ENCODE measurements at regions of chr1 and their contacts with region 1.

Region 1: DNA sequence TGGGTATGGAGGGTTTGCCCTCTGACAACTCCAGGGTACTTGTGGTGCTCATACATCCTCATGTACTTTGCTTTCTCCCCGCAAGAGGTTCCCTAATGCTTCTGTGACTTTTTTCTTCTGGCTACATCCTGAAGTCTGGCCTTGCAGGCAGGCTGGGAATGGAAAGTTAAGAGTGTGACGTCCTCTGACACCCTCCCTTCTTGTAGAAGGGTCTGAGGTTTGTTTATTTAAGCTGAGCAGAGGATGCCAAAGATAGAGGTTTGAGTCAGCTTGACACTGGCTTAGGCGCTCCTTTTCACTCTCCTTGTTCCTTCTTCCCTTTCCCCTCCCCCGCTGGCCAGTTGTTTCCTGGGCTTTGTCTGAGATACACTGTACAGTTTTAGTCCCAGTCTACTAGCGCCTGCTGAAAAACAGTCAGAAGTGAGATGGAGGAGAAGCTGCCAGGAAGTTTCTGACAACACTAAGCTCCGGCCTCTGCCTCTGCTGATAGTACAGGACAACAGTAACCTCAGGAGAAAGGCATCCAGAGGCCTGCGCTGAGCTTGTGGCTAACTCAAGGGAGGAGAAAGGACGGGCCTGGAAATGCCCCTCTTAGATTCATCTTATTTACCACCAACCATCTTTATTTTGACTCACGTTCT is at the start of gene MACF1:
- DNase-seq: peak; percentile 46
- H3K4me3 Mint-ChIP-seq: peak within 1 kb of the TSS; percentile 87
- H3K27ac Mint-ChIP-seq: peak within 1 kb of the TSS; percentile 93
- H3K4me1 Mint-ChIP-seq: peaks cover 59% of the 10 kb centered on the region
- H3K27me3 Mint-ChIP-seq: no peaks in the 10 kb centered on the region
- total RNA-seq, gene MACF1: 375 to 395 TPM

Region 2: DNA sequence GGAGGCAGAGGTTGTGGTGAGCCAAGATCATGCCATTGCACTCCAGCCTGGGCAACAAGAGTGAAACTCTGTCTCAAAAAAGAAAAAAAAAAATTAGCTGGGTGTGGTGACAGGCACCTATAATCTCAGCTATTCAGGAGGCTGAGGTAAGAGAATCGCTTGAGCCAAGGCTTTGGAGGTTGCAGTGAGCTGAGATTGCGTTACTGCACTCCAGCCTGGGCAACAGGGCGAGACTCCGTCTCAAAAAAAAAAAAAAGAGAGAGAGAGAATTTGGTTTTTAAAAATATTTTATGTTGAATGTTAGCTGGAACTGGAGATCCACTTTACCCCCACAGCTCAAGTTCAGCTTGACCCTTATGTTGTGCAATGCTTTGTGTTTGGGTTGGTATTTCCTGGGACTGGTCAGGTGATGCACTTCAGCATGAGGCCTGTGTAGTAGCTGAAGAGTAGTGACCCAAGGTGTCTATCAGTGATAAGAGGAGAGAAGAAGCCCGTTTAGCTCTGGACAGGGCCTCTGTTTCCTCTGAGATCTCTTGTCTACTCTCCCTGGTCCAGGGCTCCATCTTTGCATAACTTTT is 36.8 kb before region 1 on chr1:
- CTCF ChIA-PET with region 1: no interaction called
- POLR2A ChIA-PET with region 1: no interaction called
- DNase-seq: no peak
- H3K4me3 Mint-ChIP-seq: no peak overlapping the region
- H3K27ac Mint-ChIP-seq: no peak overlapping the region
- H3K4me1 Mint-ChIP-seq: no peaks in the 10 kb centered on the region
- H3K27me3 Mint-ChIP-seq: no peaks in the 10 kb centered on the region

Region 3: DNA sequence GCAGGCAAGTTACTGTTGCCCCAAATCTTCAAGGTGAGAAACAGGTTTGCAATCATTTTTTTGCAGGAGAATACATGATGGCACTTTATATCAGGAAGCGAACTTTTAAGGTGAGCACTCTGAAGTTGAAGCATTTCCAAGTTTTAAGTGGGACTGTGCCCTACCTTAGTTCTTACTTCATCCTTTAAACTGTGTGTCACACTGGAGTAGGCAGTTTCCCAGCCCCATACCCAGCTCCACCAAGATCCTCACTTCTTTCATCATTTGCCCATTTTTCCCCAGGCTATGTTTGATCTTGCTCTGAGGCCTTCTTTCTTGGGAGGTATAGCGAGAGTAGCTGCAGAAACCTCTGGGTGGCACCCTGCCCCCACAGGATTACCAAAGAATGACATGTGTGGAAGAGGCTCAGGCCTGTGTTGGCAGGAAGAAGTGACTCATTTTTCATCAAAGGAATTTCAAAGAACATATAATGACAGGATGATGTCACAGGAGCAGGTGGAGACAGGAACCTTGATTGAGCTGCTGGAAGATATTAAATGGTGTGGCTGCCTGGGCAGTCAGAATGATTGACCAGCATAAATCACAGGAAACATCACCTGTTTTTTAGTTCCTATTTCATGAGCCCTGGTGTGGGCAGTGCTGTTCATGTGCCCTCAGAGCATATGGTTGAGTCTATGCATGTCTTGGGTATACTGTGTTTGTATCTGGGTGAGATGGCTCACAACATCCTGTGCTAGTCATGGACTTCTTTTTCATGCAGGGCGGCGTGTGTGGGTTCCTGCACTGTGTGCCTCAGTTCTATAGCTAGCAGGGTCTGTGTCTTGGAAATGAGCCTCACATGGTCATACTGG is 20.8 kb before region 1 on chr1:
- CTCF ChIA-PET with region 1: interaction called, 16 read pairs
- POLR2A ChIA-PET with region 1: interaction called, 3 read pairs
- DNase-seq: peak; percentile 89
- H3K4me3 Mint-ChIP-seq: no peak overlapping the region
- H3K27ac Mint-ChIP-seq: peak overlapping the region; percentile 82
- H3K4me1 Mint-ChIP-seq: peaks cover 47% of the 10 kb centered on the region
- H3K27me3 Mint-ChIP-seq: no peaks in the 10 kb centered on the region

Region 4: DNA sequence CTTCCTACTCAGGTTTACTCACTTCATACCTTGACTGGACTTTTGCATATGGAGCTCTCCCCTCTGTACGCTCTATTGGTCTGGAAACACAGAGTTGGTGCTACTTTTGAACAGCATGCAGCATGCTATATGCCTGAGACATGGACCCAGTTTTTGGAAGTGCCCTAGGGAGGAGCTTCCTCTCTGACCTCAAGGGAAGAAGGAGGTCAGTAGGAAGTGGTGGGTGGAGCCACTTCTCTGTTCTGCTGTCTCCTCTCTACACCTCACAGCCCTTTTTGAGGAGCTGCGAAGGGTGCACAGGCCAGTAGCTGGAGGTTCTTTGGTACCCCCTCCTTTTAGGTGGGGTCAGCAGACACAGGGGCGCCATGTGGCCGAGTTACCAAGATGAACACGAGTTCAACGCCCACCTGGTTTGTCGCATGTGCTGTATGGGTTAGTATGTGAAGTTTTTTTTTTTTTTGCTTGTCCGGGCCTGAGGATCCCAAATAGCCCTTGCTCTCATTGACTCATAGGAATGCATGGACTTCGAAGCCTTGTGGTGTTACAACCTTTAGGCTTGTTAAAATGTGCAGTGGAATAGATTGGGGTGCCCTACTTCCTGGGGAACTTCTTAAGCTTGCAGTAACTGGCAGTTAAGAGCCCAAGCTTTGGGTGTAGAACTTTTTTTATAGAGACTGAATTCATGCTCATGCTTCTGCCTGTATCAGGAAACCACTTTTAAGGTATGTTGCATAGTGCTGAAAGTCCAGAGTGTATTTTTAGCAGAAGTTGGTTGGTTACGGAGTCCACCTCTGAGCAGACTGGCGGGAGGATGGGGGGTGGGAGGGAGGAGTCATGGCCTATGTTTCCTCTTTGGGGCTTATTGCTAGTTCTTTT is 10.7 kb after region 1 on chr1:
- CTCF ChIA-PET with region 1: interaction called, 24 read pairs
- POLR2A ChIA-PET with region 1: interaction called, 11 read pairs
- DNase-seq: peak; percentile 51
- H3K4me3 Mint-ChIP-seq: peak overlapping the region; percentile 92
- H3K27ac Mint-ChIP-seq: peak overlapping the region; percentile 92
- H3K4me1 Mint-ChIP-seq: peaks cover 57% of the 10 kb centered on the region
- H3K27me3 Mint-ChIP-seq: no peaks in the 10 kb centered on the region

Measured in activated CD4-positive, alpha-beta T cell treated with anti-CD3 and anti-CD28 coated beads, Interleukin-2, amount 10 ng/mL, durations not matched to agents 7 days and 5 days (primary cell).